Motor neuron (in vitro differentiated cells): ENCODE measurements at regions of chr6 and their contacts with region 1.

Region 1: DNA sequence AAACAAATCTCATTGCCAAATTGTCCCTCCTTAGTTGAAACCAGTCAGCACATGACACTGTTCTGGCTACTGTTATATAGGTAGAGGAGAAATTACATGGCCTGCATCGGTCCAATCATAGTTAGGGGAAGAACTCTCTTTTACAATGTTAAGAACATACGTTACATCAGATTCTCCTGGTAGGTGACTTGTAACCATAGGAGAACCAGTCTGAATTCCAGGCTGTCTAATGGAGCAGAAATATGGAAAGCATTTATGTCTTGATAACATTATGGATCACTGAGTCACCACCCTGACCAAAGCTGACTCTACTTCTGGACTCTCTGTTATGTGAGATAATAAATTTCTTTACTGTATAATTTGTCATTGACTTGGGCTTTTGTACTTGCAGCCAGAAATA is 40.9 kb downstream of the HTR1E start:
- ATAC-seq: no peak
- H3K4me3 ChIP-seq: no peak overlapping the region
- H3K27ac ChIP-seq: no peak overlapping the region
- H3K4me1 ChIP-seq: no peaks in the 10 kb centered on the region

Region 2: GRCh38 chr6:85923013-85923430 is 1055.2 kb before region 1 on chr6:
- in situ Hi-C with region 1: loop called in 1 of 9 experiments (anchors 25 kb)
- ATAC-seq: peak; percentile 82 to 99 (median 88)
- H3K4me3 ChIP-seq: no peak overlapping the region
- H3K27ac ChIP-seq: no peak overlapping the region
- H3K4me1 ChIP-seq: no peaks in the 10 kb centered on the region

Region 3: GRCh38 chr6:86888301-86888700 is 90.0 kb before region 1 on chr6:
- in situ Hi-C with region 1: no loop called
- ATAC-seq: peak in 1 of 8 experiments; percentile 90
- H3K4me3 ChIP-seq: no peak overlapping the region
- H3K27ac ChIP-seq: no peak overlapping the region
- H3K4me1 ChIP-seq: no peaks in the 10 kb centered on the region

Region 4: GRCh38 chr6:87040729-87041128 is 62.5 kb after region 1 on chr6:
- in situ Hi-C with region 1: no loop called
- ATAC-seq: no peak
- H3K4me3 ChIP-seq: no peak overlapping the region
- H3K27ac ChIP-seq: no peak overlapping the region
- H3K4me1 ChIP-seq: no peaks in the 10 kb centered on the region